Calu3 (cell line): ENCODE measurements at regions of chr11 and their contacts with region 1.

Region 1: GRCh38 chr11:133834682-133835592 is 10.4 kb downstream of the SPATA19 start:
- DNase-seq: peak; percentile 52
- H3K4me3 Mint-ChIP-seq: no peak overlapping the region
- H3K27ac Mint-ChIP-seq: no peak overlapping the region
- H3K4me1 Mint-ChIP-seq: no peaks in the 10 kb centered on the region
- H3K27me3 Mint-ChIP-seq: no peaks in the 10 kb centered on the region
- CTCF ChIP-seq: peak; percentile 58

Region 2: DNA sequence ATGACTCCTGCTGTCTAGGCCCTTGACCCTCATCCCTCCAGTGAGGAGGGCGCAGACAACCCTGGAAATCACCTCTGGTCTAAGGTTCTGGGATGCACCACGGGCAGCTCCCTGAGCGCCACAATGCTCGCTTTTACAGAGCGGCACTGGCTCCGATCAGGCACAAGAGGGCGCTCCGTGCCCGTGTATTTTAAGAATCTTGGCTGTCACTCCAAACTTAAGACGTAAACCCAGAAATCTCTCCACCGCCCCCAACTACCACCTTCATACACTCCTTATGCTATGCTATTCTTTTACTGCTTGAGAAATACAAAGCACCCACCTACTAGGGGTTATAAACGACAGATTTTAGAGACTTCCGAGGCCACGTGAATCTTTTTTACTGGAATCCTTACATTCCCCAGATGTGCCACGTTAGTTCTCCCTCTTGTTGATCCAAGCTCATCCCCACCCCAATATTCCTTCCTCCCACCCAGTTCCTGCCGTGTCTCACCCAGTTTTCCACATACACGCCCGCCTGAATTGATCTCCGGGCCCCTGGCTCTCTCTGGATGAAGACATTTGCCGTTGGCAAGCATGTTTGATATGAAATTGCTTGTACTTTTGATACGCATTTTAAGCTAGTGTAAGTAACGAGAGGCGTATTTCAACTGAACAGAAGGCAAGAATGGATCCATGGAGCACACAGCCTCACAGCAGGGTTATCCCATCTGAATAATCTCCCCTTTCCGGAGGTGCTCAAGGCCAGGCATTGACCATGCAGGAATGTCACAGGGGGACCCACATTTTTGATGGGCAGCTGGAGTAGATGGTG is 756.1 kb before region 1 on chr11:
- CTCF ChIA-PET with region 1: interaction called, 10 read pairs
- intact Hi-C with region 1: loop called (anchors 1 kb)
- DNase-seq: peak; percentile 36
- H3K4me3 Mint-ChIP-seq: no peak overlapping the region
- H3K27ac Mint-ChIP-seq: no peak overlapping the region
- H3K4me1 Mint-ChIP-seq: no peaks in the 10 kb centered on the region
- H3K27me3 Mint-ChIP-seq: peaks cover 11% of the 10 kb centered on the region
- CTCF ChIP-seq: peak; percentile 73

Region 3: DNA sequence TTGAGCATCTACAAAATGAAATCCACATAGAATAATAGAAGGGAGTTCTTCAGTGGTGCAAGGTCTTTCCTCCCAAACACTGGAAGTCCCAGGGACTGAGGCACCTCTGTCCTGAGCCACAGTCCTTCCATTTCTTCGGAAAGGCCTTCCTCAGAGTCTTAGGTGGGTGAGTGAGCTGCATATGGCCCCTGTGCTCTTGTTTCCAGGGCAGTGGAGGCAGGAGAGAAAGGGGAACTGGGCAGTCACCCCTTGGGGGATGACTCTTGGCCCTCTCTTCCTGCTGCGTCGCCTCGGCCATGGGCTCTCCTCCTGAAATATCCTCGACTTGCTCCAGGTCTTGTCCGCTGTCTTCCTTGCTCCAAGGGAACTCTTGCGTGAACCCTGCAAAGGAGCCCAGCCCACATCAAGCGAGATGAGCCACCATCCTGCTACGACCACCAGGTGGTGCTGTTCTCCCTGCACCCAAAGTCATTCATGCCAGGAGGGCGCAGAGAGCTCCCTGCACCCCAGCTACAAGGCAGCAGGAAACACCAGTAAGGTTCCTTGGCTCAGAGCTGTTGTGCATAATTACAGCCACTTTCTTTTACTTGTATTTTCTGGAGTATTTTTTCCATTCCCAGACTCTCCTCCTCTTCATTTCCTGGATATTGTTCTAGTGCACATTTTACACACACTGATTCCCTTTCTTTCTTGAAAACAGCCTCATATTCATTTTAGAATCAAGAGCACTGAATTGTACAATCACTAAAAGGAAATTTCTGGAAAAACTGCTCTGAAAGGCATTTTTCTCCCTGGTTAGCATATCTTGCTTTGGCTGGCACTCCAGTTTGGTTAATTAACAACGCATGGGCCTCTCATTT is 700.4 kb before region 1 on chr11:
- CTCF ChIA-PET with region 1: interaction called, 8 read pairs
- intact Hi-C with region 1: loop called (anchors 1 kb)
- DNase-seq: peak; percentile 38
- H3K4me3 Mint-ChIP-seq: no peak overlapping the region
- H3K27ac Mint-ChIP-seq: no peak overlapping the region
- H3K4me1 Mint-ChIP-seq: no peaks in the 10 kb centered on the region
- H3K27me3 Mint-ChIP-seq: no peaks in the 10 kb centered on the region
- CTCF ChIP-seq: peak; percentile 56

Region 4: GRCh38 chr11:133778161-133778560 is 56.8 kb before region 1 on chr11:
- CTCF ChIA-PET with region 1: no interaction called
- intact Hi-C with region 1: no loop called
- DNase-seq: no peak
- H3K4me3 Mint-ChIP-seq: no peak overlapping the region
- H3K27ac Mint-ChIP-seq: no peak overlapping the region
- H3K4me1 Mint-ChIP-seq: no peaks in the 10 kb centered on the region
- H3K27me3 Mint-ChIP-seq: no peaks in the 10 kb centered on the region
- CTCF ChIP-seq: no peak

Region 5: DNA sequence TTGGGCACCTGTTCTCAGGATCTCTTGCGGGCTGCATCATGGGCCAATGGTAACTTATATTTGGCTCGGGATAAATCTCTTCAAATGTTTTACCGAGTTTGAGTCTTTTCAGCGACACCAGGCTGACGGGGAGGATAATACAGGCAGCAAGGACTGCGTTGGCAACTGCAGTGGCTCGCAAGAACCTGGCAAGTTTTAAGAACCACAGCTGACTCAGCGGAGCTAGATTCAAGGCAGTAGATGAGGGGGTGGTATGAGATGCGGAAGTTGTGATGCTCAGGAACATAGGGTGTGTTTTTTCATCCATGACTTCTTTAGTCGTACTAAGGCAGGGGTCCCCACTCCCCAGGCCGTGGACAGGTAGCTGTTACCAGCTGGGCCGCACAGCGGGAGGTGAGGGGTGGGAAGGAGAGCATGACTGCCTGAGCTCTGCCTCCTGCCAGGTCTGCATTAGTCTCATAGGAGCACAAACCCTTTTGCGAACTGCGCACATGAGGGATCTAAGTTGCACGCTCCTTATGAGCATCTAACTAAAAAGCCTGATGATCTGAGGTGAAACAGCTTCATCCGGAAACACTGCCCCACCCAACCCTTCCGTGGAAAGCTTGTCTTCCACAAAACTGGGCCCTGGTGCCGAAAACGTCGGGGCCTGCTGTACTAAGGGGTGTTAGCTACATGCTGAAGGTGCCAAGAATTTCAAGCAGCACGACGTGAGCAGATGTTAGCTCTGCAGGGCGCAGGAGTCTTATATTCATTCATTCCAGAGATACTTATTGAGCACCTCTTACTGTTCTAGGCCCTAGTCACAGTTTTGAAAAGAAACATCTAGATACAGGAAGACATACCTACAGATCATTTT is 227.6 kb after region 1 on chr11:
- CTCF ChIA-PET with region 1: no interaction called
- intact Hi-C with region 1: no loop called
- DNase-seq: no peak
- H3K4me3 Mint-ChIP-seq: no peak overlapping the region
- H3K27ac Mint-ChIP-seq: no peak overlapping the region
- H3K4me1 Mint-ChIP-seq: no peaks in the 10 kb centered on the region
- H3K27me3 Mint-ChIP-seq: peaks cover 74% of the 10 kb centered on the region
- CTCF ChIP-seq: no peak